ENCODE measurements at regions of chr20 and their contacts with region 1.

Region 1: GRCh38 chr20:11544029-11544678 is 373.5 kb upstream of the BTBD3 start:
- H3K4me3 ChIP-seq: no peak overlapping the region
- H3K27ac ChIP-seq: no peak overlapping the region
- H3K4me1 ChIP-seq: no peaks in the 10 kb centered on the region
- CTCF ChIP-seq: no peak

Region 2: GRCh38 chr20:11267131-11267761 is 276.9 kb before region 1 on chr20:
- CTCF ChIA-PET with region 1: interaction called, 10 read pairs
- POLR2A ChIA-PET with region 1: no interaction called
- H3K4me3 ChIP-seq: no peak overlapping the region
- H3K27ac ChIP-seq: peak overlapping the region; percentile 54; the same call in 1 of the 2 replicates
- H3K4me1 ChIP-seq: peaks cover 8% of the 10 kb centered on the region; the same call in 1 of the 2 replicates
- CTCF ChIP-seq: no peak